ENCODE measurements at regions of chr3 and their contacts with region 1.

Region 1: DNA sequence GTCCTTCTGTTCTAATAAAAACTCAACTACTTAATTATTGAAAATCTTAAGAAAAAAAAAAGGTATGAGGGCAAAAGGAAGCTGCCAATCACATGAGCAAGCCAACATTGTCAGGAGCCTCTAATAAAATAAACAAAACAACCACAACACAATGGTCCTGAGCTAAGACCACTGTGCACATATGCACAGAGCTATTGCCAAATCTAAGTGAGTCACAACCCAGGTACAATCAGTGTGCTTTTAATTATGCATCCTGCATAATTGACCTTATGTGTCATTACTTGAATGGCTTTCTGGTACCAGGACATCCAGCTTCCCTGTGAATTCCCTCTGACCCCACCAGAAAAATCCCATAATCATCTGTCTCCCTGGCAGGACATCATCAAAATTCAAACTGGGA is 639.8 kb downstream of the MAGI1 start:
- DNase-seq: no peak
- H3K4me3 ChIP-seq: no peak overlapping the region
- H3K27ac ChIP-seq: no peak overlapping the region
- H3K4me1 ChIP-seq: peaks cover 23 to 29% (median 27%) of the 10 kb centered on the region in 4 experiments
- H3K27me3 ChIP-seq: no peaks in the 10 kb centered on the region
- CTCF ChIP-seq: no peak
- EP300 ChIP-seq: no peak
- POLR2A ChIP-seq: no peak
- RAD21 ChIP-seq: no peak

Region 2: GRCh38 chr3:65356331-65357286 is 42.3 kb before region 1 on chr3:
- CTCF ChIA-PET with region 1: no interaction called
- POLR2A ChIA-PET with region 1: no interaction called
- DNase-seq: no peak
- H3K4me3 ChIP-seq: peak overlapping the region; percentile 7 to 47 (median 13); a peak in 4 of 8 replicates
- H3K27ac ChIP-seq: peak overlapping the region; percentile 1; the same call in 1 of the 2 replicates
- H3K4me1 ChIP-seq: peaks cover 0 to 8% (median 2%) of the 10 kb centered on the region in 4 experiments; a peak in 4 of 7 replicates
- H3K27me3 ChIP-seq: no peaks in the 10 kb centered on the region
- CTCF ChIP-seq: peak in 2 of 3 experiments; percentile 6 to 19; a peak in 2 of 4 replicates
- EP300 ChIP-seq: no peak
- POLR2A ChIP-seq: no peak
- RAD21 ChIP-seq: no peak

Region 3: DNA sequence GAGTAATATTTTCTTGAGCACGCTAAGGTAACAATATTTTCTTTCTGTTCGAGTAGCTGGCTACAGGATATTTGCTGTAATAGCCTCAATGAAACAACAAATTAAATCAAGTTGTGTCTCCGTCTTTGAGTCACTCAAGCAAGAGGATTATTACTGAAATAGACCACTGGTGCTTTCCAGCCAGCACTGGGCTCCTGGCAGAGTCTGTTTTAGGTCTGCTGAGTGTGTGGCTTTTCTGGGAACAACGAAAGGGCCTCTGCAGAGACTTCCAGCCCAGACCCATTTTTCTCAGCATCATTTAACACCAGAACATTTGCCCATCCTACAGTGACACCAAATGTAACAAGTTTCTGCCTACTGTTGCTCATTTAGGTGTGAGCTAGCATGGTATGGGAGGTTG is 13.1 kb before region 1 on chr3:
- CTCF ChIA-PET with region 1: interaction called, 11 read pairs
- POLR2A ChIA-PET with region 1: no interaction called
- DNase-seq: no peak
- H3K4me3 ChIP-seq: no peak overlapping the region
- H3K27ac ChIP-seq: no peak overlapping the region
- H3K4me1 ChIP-seq: peaks cover 2 to 5% (median 3%) of the 10 kb centered on the region in 4 experiments; a peak in 6 of 7 replicates
- H3K27me3 ChIP-seq: no peaks in the 10 kb centered on the region; a peak in 1 of 7 replicates
- CTCF ChIP-seq: no peak
- EP300 ChIP-seq: no peak
- POLR2A ChIP-seq: no peak
- RAD21 ChIP-seq: no peak

Region 4: GRCh38 chr3:65532215-65532614 is 133.3 kb after region 1 on chr3:
- CTCF ChIA-PET with region 1: no interaction called
- POLR2A ChIA-PET with region 1: no interaction called
- DNase-seq: no peak
- H3K4me3 ChIP-seq: no peak overlapping the region
- H3K27ac ChIP-seq: no peak overlapping the region
- H3K4me1 ChIP-seq: peaks cover 0 to 4% (median 1%) of the 10 kb centered on the region in 4 experiments; a peak in 2 of 7 replicates
- H3K27me3 ChIP-seq: no peaks in the 10 kb centered on the region
- CTCF ChIP-seq: no peak
- EP300 ChIP-seq: no peak
- POLR2A ChIP-seq: no peak
- RAD21 ChIP-seq: no peak

Measured in H1 (cell line).